ENCODE measurements at regions of chr17 and their contacts with region 1.

Region 1: DNA sequence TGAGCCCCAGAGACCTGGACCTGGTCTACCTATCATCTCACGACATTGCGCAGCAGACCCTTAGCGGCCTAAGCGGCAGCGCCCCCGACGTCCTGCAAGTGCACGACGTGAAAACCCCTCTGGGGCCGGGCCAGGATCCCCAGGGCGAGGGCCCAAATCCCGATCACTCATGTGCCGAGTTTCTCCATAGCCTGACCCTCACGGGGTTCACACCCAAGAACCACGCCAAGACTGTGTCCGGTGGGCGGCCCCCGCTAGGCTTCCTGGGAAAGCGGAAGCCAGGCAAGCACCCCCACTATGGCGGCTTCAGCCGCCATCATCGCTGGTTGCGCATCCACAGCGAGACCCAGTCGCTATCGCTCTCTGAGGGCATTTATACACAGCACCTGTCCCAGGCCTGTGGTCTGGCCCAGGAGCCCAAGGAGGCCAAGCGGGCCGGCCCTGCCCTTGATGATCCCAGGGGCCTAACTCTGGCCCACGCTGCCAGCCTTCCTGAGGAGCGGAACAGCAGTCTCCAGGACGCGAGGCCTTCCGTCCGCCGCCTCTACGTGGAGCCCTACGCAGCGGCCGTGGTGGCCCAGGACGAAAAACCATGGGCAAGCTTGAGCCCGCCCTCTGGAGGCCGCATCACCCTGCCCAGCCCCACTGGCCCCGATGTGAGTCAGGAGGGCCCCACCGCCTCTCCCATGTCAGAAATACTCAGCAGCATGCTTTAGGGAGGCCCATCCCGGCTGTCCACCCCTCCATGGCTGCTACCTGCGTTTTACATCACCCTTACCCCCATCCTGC is 82.8 kb upstream of the NOG start:
- DNase-seq: no peak
- H3K4me3 ChIP-seq: no peak overlapping the region
- H3K27ac ChIP-seq: no peak overlapping the region
- H3K4me1 ChIP-seq: no peaks in the 10 kb centered on the region
- H3K27me3 ChIP-seq: no peaks in the 10 kb centered on the region; the same call in 1 of the 2 replicates
- CTCF ChIP-seq: no peak
- EP300 ChIP-seq: no peak
- RAD21 ChIP-seq: no peak

Region 2: DNA sequence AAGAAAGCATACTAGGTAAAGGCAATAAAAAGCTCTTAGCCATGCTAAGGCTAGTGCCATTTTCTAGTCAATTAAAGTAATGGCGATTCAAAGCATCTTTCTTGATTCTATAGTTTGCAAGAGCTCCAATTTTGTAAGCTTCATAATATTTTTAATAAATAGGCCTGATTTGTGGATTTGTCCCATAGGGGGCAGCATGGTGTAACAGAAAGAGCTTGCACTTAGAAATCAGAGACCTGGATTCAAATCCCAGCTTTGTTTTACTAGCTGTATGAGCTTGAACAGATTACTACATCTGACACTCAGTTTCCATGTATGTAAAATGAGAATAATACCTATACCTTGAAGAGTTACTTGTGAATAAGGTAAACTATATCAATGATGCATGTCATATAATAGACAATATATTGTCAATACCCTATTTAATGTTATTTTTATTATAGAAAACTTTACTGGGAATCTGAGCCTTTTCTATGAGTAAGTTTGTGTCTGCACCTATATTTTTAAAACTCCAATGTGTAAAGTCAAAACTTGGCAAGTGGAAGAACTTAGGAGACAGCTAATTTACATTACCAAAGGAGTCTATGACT is 10.9 kb before region 1 on chr17:
- CTCF ChIA-PET with region 1: interaction called, 17 read pairs
- POLR2A ChIA-PET with region 1: no interaction called
- DNase-seq: no peak
- H3K4me3 ChIP-seq: no peak overlapping the region; a peak in 1 of 4 replicates
- H3K27ac ChIP-seq: no peak overlapping the region
- H3K4me1 ChIP-seq: no peaks in the 10 kb centered on the region
- H3K27me3 ChIP-seq: no peaks in the 10 kb centered on the region; the same call in 1 of the 2 replicates
- CTCF ChIP-seq: peak; percentile 73
- EP300 ChIP-seq: no peak
- RAD21 ChIP-seq: peak; percentile 66